Colonic mucosa (tissue), 4 donors: ENCODE measurements at regions of chr2 and their contacts with region 1.

Region 1: DNA sequence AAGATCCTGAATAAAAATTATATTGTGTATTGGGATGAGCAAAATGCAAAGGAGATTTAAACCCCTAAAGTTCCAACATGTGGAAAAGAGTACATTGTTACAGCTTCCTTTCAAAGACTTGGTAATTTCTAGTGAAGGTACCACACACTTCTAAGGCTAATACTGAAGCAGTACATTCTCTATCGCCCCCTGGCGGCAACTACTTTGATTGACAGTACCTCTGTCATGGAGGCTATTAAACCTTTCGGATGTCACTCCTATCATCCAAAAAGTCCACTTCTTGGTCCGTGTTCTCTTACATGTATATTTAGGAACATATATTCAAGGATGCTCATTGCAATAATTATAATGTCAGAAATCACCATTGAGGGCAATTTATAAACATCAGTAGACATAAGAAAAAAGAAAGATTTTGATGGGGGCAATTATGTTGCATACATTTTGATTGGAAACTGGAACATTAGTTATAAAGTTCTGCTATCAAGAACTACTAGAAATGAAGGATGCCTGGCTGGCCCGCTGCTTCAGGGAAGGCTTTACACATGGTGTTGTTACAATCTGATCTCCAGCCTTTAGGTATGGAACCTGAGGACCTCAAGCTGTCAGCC is 601.6 kb downstream of the CPS1 start:
- DNase-seq: peak; percentile 76
- H3K4me3 ChIP-seq: no peak overlapping the region
- H3K27ac ChIP-seq: no peak overlapping the region
- H3K4me1 ChIP-seq: no peaks in the 10 kb centered on the region
- H3K27me3 ChIP-seq: no peaks in the 10 kb centered on the region
- CTCF ChIP-seq: peak; percentile 67

Region 2: DNA sequence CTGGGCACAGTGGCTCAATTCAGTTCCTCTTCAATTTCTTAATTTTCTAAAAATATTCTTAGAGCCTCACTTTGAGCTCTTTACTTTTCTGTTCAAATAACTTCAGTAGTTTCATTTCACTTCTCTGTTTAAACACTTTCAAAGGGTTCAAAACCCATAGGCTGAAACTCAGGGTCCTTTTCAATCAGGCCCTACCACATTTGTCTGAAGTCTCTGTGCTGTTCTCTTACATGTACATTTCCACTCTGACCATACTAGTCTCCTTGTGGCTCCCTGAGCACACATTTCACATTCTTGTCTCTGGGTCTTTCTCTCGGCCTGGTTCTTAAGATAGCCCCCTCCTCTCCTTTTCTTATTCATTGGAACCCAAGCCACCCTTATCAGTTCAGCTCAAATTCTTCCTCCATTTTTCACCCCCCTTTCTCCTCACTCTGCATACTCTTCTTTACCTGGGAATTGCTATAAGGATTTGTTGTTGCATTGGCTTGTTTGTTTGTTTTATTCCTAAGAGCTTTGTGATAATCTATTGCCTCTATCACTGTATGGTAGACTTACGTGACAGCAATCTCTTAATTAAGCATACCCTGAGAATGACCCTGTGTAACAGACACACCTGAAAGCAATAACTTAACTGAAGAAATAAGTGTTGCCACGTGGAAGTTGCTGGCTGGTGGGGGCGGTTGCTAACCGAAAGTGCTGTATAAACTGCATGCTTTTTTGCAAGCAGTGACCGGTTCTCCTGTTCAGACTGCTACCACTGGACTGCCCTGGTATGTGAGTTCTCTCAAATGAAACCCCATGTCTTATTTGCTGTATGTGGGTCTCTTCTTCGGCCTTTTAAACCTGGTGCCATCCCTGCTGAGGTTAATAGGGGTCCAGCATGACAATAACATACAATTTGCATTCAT is 905.0 kb before region 1 on chr2:
- intact Hi-C with region 1: loop called (anchors 10 kb)
- DNase-seq: no peak
- H3K4me3 ChIP-seq: no peak overlapping the region
- H3K27ac ChIP-seq: no peak overlapping the region
- H3K4me1 ChIP-seq: no peaks in the 10 kb centered on the region
- H3K27me3 ChIP-seq: no peaks in the 10 kb centered on the region
- CTCF ChIP-seq: no peak

Region 3: DNA sequence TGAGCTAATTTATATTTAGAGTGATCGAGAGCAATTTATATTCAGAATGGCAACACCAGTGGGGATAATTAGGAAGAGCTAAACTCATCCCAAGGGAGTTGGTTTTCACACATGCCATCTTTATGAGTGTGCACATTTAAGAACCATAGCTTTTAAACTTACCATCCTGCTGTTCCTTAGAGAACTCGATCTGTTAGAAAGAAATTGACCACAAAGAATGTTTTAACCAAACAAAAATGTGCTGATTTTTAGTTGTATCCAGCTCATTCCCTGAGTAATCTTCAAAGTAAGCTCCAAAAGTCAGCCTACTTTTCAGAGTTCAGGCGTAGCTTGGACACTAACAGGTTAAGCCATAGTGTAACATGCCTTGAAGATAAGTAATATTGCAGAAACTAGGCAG is 855.6 kb before region 1 on chr2:
- intact Hi-C with region 1: no loop called
- DNase-seq: no peak
- H3K4me3 ChIP-seq: no peak overlapping the region
- H3K27ac ChIP-seq: no peak overlapping the region
- H3K4me1 ChIP-seq: no peaks in the 10 kb centered on the region
- H3K27me3 ChIP-seq: no peaks in the 10 kb centered on the region
- CTCF ChIP-seq: no peak

Region 4: GRCh38 chr2:211085056-211085680 is 72.8 kb before region 1 on chr2:
- intact Hi-C with region 1: loop called (anchors 5 kb)
- DNase-seq: peak; percentile 21
- H3K4me3 ChIP-seq: no peak overlapping the region
- H3K27ac ChIP-seq: no peak overlapping the region
- H3K4me1 ChIP-seq: no peaks in the 10 kb centered on the region
- H3K27me3 ChIP-seq: no peaks in the 10 kb centered on the region
- CTCF ChIP-seq: peak; percentile 61